MCF 10A (cell line): ENCODE measurements at regions of chr6 and their contacts with region 1.

Region 1: GRCh38 chr6:54717849-54718455 is 128.6 kb upstream of the FAM83B start:
- DNase-seq: peak; percentile 80
- H3K4me3 Mint-ChIP-seq: no peak overlapping the region
- H3K27ac Mint-ChIP-seq: no peak overlapping the region
- H3K4me1 Mint-ChIP-seq: peaks cover 16% of the 10 kb centered on the region
- H3K27me3 Mint-ChIP-seq: no peaks in the 10 kb centered on the region
- CTCF ChIP-seq: peak; percentile 77

Region 2: DNA sequence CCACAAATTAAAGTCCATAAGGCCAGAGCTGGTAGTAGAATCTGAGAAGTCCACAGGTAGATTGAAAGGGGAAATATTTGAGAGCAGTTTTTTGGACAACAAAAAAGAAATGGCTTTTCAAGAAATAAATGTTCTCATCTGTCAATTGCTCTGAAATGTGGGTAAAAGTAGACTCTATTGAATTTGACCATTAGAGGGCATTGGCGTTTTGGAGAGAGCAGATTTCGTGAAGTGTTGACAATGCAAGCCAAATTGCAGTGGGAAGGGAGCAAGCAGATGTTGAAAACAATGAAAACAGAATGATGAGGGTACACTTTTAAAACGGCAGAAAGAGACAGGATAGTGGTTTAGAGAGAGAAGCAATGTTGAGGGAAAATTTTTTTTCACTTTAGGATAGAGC is 20.5 kb before region 1 on chr6:
- CTCF ChIA-PET with region 1: interaction called, 16 read pairs
- POLR2A ChIA-PET with region 1: no interaction called
- intact Hi-C with region 1: no loop called
- DNase-seq: peak; percentile 32
- H3K4me3 Mint-ChIP-seq: no peak overlapping the region
- H3K27ac Mint-ChIP-seq: peak overlapping the region; percentile 6
- H3K4me1 Mint-ChIP-seq: peaks cover 10% of the 10 kb centered on the region
- H3K27me3 Mint-ChIP-seq: no peaks in the 10 kb centered on the region
- CTCF ChIP-seq: peak; percentile 31

Region 3: GRCh38 chr6:54706844-54707605 is 10.9 kb before region 1 on chr6:
- CTCF ChIA-PET with region 1: interaction called, 16 read pairs
- POLR2A ChIA-PET with region 1: no interaction called
- intact Hi-C with region 1: no loop called
- DNase-seq: no peak
- H3K4me3 Mint-ChIP-seq: no peak overlapping the region
- H3K27ac Mint-ChIP-seq: peak overlapping the region; percentile 14
- H3K4me1 Mint-ChIP-seq: no peaks in the 10 kb centered on the region
- H3K27me3 Mint-ChIP-seq: no peaks in the 10 kb centered on the region
- CTCF ChIP-seq: no peak

Region 4: GRCh38 chr6:54810139-54810538 is 92.2 kb after region 1 on chr6:
- CTCF ChIA-PET with region 1: interaction called, 10 read pairs
- POLR2A ChIA-PET with region 1: no interaction called
- intact Hi-C with region 1: no loop called
- DNase-seq: no peak
- H3K4me3 Mint-ChIP-seq: no peak overlapping the region
- H3K27ac Mint-ChIP-seq: no peak overlapping the region
- H3K4me1 Mint-ChIP-seq: no peaks in the 10 kb centered on the region
- H3K27me3 Mint-ChIP-seq: no peaks in the 10 kb centered on the region
- CTCF ChIP-seq: no peak

Region 5: GRCh38 chr6:55239099-55239498 is 521.1 kb after region 1 on chr6:
- CTCF ChIA-PET with region 1: interaction called, 30 read pairs
- POLR2A ChIA-PET with region 1: no interaction called
- intact Hi-C with region 1: loop called (anchors 5 kb)
- DNase-seq: peak; percentile 37
- H3K4me3 Mint-ChIP-seq: no peak overlapping the region
- H3K27ac Mint-ChIP-seq: no peak overlapping the region
- H3K4me1 Mint-ChIP-seq: peaks cover 10% of the 10 kb centered on the region
- H3K27me3 Mint-ChIP-seq: no peaks in the 10 kb centered on the region
- CTCF ChIP-seq: no peak